ENCODE measurements at regions of chr1 and their contacts with region 1.

Region 1: DNA sequence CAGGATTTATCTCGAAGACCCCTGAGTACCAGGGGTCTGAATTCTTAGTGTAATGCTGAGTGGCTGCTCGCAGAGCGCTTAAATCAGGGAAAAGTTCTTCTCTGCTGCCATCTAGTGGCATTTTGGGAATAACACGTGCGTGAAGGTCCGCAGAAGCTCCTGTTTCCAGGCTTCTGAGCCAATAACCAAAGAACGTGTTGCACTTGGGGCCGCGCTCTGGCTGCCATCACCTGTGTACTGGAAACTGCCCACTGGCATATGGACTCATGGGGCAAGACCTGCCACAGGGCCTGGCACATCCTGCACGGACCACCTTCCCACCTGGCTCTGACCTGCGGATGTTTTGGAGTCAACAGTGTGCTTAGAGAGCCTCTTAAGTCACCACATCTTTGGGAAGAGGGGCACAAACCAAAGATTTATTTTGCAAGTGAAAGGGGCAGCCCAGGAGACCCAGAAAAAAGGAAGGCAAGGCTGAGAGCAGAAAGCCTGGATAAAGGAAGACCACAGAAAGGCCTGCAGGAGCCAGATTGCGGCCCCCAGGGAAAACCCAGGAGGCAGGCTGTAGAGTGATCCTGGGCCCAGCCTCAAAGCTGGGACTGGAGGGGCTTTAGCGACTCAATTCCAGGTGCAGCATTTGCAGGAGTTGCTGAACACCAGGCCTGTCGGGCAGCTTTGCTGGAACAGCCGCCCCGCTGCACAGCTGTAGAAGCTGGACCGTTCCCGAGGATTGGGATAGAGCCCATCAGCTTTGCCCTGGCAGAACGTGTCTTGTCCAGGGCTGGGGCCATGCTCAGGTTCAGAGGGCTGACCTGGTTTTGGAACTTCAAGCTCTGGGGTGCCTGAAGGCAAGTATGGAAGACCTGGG is 13.0 kb downstream of the CHIT1 start:
- DNase-seq: peak; percentile 52 to 91
- H3K4me3 ChIP-seq: no peak overlapping the region
- H3K27ac ChIP-seq: no peak overlapping the region
- H3K4me1 ChIP-seq: peaks cover 0 to 11% (median 4%) of the 10 kb centered on the region in 4 donors
- H3K27me3 ChIP-seq: peaks cover 0 to 22% (median 7%) of the 10 kb centered on the region in 3 donors
- CTCF ChIP-seq: peak in 5 of 7 experiments; percentile 58 to 73 (median 69)
- EP300 ChIP-seq: no peak
- POLR2A ChIP-seq: no peak

Region 2: GRCh38 chr1:203039609-203040512 is 176.6 kb before region 1 on chr1:
- intact Hi-C with region 1: loop called (anchors 2 kb)
- DNase-seq: no peak
- H3K4me3 ChIP-seq: no peak overlapping the region
- H3K27ac ChIP-seq: no peak overlapping the region
- H3K4me1 ChIP-seq: peaks cover 0 to 36% (median 11%) of the 10 kb centered on the region in 4 donors
- H3K27me3 ChIP-seq: peaks cover 0 to 14% (median 0%) of the 10 kb centered on the region in 3 donors
- CTCF ChIP-seq: no peak
- EP300 ChIP-seq: no peak
- POLR2A ChIP-seq: no peak

Region 3: GRCh38 chr1:203117611-203118575 is 98.6 kb before region 1 on chr1:
- intact Hi-C with region 1: loop called (anchors 5 kb)
- DNase-seq: peak; percentile 72 to 91
- H3K4me3 ChIP-seq: no peak overlapping the region
- H3K27ac ChIP-seq: no peak overlapping the region
- H3K4me1 ChIP-seq: peaks cover 6 to 10% (median 8%) of the 10 kb centered on the region in 4 donors
- H3K27me3 ChIP-seq: peaks cover 0 to 71% (median 35%) of the 10 kb centered on the region in 3 donors
- CTCF ChIP-seq: peak in 5 of 7 experiments; percentile 55 to 77 (median 64)
- EP300 ChIP-seq: no peak
- POLR2A ChIP-seq: no peak

Region 4: GRCh38 chr1:203361945-203362719 is 145.6 kb after region 1 on chr1:
- intact Hi-C with region 1: no loop called
- DNase-seq: no peak
- H3K4me3 ChIP-seq: no peak overlapping the region
- H3K27ac ChIP-seq: no peak overlapping the region
- H3K4me1 ChIP-seq: peaks cover 0 to 13% (median 2%) of the 10 kb centered on the region in 4 donors
- H3K27me3 ChIP-seq: peaks cover 0 to 8% (median 0%) of the 10 kb centered on the region in 3 donors
- CTCF ChIP-seq: no peak
- EP300 ChIP-seq: no peak
- POLR2A ChIP-seq: no peak

Measured in stomach (tissue), 19 donors.